Endothelial cell of umbilical vein (primary cell): ENCODE measurements at regions of chr3 and their contacts with region 1.

Region 1: GRCh38 chr3:190321789-190322603 is at the start of gene CLDN1:
- DNase-seq: peak; percentile 67
- H3K4me3 ChIP-seq: peak within 1 kb of the TSS in 2 of 3 experiments; percentile 9 to 46
- H3K27ac ChIP-seq: no peak within 1 kb of the TSS
- H3K4me1 ChIP-seq: peaks cover 4% of the 10 kb centered on the region
- H3K27me3 ChIP-seq: peaks cover 2 to 10% of the 10 kb centered on the region in 2 experiments
- CTCF ChIP-seq: peak; percentile 93 to 98
- POLR2A ChIP-seq: no peak
- total RNA-seq, gene CLDN1: 0.27 and 0.32 TPM in 2 replicates

Region 2: GRCh38 chr3:189967254-189967865 is 354.6 kb before region 1 on chr3:
- CTCF ChIA-PET with region 1: interaction called, 90 read pairs
- POLR2A ChIA-PET with region 1: no interaction called
- dilution Hi-C with region 1: loop called (anchors 25 kb)
- intact Hi-C with region 1: loop called (anchors 1 kb)
- DNase-seq: peak; percentile 71
- H3K4me3 ChIP-seq: no peak overlapping the region
- H3K27ac ChIP-seq: no peak overlapping the region
- H3K4me1 ChIP-seq: no peaks in the 10 kb centered on the region
- H3K27me3 ChIP-seq: no peaks in the 10 kb centered on the region
- CTCF ChIP-seq: peak; percentile 58 to 63
- POLR2A ChIP-seq: no peak

Region 3: GRCh38 chr3:190120269-190121060 is 201.5 kb before region 1 on chr3 and contains the start of gene P3H2:
- CTCF ChIA-PET with region 1: interaction called, 14 read pairs
- POLR2A ChIA-PET with region 1: no interaction called
- dilution Hi-C with region 1: no loop called
- intact Hi-C with region 1: loop called (anchors 5 kb)
- DNase-seq: peak; percentile 93
- H3K4me3 ChIP-seq: peak within 1 kb of the TSS; percentile 60 to 83 (median 62)
- H3K27ac ChIP-seq: peak within 1 kb of the TSS; percentile 51
- H3K4me1 ChIP-seq: peaks cover 9% of the 10 kb centered on the region
- H3K27me3 ChIP-seq: peaks cover 0 to 2% of the 10 kb centered on the region in 2 experiments
- CTCF ChIP-seq: peak; percentile 54 to 70
- POLR2A ChIP-seq: no peak
- total RNA-seq, gene P3H2: 4.8 and 6.6 TPM in 2 replicates

Region 4: DNA sequence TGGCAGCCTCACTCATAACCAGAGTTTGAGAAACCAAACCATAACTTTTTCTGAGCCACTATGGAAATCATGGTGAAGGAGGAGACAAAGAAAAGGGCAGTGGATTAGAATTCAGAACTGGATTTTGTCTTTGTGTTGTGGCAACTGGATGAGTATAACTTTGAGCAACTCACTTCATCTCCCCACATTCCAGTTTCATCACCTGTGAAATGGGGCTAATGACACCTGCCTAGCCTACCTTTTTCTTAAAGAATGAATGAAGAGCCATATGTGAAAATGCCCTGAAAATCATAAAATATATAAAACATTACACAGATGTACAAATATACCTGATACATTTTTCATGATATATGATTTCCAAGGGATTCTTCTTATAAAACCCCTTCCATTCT is 91.6 kb before region 1 on chr3:
- CTCF ChIA-PET with region 1: interaction called, 167 read pairs
- POLR2A ChIA-PET with region 1: no interaction called
- dilution Hi-C with region 1: no loop called
- intact Hi-C with region 1: loop called (anchors 1 kb)
- DNase-seq: no peak
- H3K4me3 ChIP-seq: no peak overlapping the region
- H3K27ac ChIP-seq: peak overlapping the region; percentile 13
- H3K4me1 ChIP-seq: peaks cover 30% of the 10 kb centered on the region
- H3K27me3 ChIP-seq: no peaks in the 10 kb centered on the region
- CTCF ChIP-seq: no peak
- POLR2A ChIP-seq: no peak

Region 5: DNA sequence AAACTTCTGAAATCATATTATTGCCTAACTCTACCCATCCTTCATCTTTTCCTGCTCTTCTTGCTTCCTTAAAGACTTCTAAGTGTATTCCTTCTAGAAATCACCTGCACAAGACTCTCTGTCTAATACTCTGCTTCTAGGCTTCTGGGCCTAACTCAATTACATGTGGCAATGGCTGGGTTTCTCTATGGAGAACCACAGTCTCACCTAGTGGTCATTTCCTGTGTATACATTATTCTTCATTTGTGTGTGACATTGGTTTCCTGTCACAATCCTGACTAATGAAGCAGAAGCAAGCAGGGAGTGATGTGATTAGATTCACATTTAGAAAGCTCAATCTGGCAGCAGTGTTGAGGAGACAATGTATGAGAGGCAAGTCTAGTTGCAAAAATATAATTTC is 17.1 kb after region 1 on chr3:
- CTCF ChIA-PET with region 1: interaction called, 41 read pairs
- POLR2A ChIA-PET with region 1: interaction called, 3 read pairs
- dilution Hi-C with region 1: no loop called
- intact Hi-C with region 1: no loop called
- DNase-seq: peak; percentile 72
- H3K4me3 ChIP-seq: no peak overlapping the region
- H3K27ac ChIP-seq: peak overlapping the region; percentile 70
- H3K4me1 ChIP-seq: peaks cover 21% of the 10 kb centered on the region
- H3K27me3 ChIP-seq: no peaks in the 10 kb centered on the region
- CTCF ChIP-seq: no peak
- POLR2A ChIP-seq: no peak

Region 6: DNA sequence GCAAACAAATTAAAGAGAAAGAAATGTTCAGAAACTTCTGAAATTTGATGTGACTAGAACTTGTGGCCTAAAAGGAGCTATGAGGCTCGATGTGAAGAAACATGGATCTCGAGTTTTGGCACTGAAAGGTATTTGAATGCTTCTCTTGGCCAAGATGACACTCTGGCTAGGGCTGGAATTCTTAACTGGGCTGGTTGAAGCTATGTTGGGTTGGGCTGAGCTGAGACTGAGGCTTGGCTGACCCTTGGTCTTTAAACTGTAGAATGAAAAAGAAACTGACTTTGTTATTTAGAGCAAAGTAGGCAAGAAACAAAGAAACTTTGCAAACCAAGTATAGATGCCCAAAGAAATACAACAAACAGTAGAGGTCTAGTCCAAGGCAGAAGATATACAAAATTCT is 37.8 kb after region 1 on chr3:
- CTCF ChIA-PET with region 1: interaction called, 11 read pairs
- POLR2A ChIA-PET with region 1: no interaction called
- dilution Hi-C with region 1: no loop called
- intact Hi-C with region 1: no loop called
- DNase-seq: no peak
- H3K4me3 ChIP-seq: no peak overlapping the region
- H3K27ac ChIP-seq: no peak overlapping the region
- H3K4me1 ChIP-seq: no peaks in the 10 kb centered on the region
- H3K27me3 ChIP-seq: peaks cover 0 to 1% of the 10 kb centered on the region in 2 experiments
- CTCF ChIP-seq: no peak
- POLR2A ChIP-seq: no peak

Region 7: DNA sequence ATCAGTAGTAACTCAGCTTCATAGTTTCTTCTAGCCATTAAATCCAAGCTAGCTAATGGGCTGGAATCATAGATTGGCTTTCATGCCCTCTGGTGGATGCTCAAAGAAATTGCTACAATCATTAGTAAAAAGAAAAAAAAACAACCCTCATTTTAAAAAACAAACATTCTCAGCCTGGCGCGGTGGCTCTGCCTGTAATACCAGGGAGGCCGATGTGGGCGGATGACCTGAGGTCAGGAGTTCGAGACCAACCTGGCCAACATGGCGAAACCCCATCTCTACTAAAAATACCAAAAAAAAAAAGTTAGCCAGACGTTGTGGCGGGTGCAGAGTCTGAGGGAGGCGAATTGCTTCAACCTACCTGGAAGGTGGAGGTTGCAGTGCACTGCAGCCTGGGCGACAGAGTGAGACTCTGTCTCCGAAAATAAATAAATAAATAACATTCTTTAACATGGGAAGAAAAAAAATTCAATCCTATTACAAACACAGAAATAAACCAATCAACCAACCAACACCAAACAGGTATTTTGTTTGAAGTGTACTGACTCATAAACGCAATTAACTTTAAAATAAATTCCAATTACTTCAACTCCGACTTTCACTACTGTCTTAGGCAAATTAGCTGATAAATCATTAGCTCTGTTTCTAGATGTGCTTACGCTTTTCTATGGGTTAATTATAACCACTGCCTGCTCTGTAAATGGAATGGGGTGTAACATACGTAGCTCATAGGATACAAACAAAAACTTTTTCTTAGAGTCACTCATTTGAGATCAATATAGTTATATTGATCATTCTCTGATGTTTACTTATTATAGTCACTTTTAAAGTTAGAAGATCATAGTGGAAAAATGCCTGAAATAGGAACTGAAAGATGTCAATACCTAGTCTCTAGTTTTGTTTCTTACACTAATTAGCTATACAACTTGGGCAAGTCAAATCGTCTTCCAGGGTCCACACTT is 102.8 kb after region 1 on chr3:
- CTCF ChIA-PET with region 1: interaction called, 72 read pairs
- POLR2A ChIA-PET with region 1: no interaction called
- dilution Hi-C with region 1: no loop called
- intact Hi-C with region 1: loop called (anchors 1 kb)
- DNase-seq: peak; percentile 76
- H3K4me3 ChIP-seq: no peak overlapping the region
- H3K27ac ChIP-seq: no peak overlapping the region
- H3K4me1 ChIP-seq: no peaks in the 10 kb centered on the region
- H3K27me3 ChIP-seq: peaks cover 0 to 2% of the 10 kb centered on the region in 2 experiments
- CTCF ChIP-seq: peak; percentile 52
- POLR2A ChIP-seq: no peak